ENCODE measurements at regions of chr16 and their contacts with region 1.

Region 1: DNA sequence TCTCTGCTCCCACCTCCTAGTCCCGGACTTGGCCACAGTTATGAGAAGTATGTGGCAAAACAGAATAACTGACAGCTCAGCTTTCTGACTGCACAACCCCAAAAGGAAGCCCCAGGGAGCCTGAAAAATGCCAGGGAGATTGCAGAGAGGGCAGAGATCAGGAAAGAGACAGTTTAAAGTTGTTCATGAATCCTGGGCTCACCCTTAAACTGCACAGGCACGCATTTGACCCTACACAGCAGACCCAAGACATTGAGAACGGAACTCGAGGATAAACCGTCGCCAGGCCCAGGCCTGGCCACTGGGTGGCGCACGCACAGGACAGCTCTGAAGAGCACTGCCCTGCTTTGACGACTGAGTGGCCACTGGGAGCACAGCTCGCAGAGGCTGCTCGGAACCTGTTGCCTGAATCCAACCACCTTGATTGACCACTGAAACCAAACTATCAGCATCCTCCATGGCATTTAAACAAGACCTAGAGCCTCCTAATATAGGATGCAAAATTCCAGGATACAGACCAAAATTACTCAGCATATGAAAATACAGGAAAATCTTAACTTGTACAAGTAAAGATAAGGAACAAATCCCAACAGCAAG is 114.0 kb downstream of the C16orf95 start:
- DNase-seq: peak; percentile 85
- ATAC-seq: peak; percentile 99
- H3K4me3 ChIP-seq: peak overlapping the region in 1 of 2 experiments; percentile 1; a peak in 1 of 4 replicates
- H3K27ac ChIP-seq: no peak overlapping the region
- H3K4me1 ChIP-seq: peaks cover 2 to 27% of the 10 kb centered on the region in 2 experiments; a peak in 3 of 4 replicates
- H3K27me3 ChIP-seq: no peaks in the 10 kb centered on the region
- CTCF ChIP-seq: peak; percentile 96 to 100 (median 100)
- POLR2A ChIP-seq: no peak
- RAD21 ChIP-seq: peak; percentile 88

Region 2: GRCh38 chr16:87178977-87179376 is 24.2 kb before region 1 on chr16:
- CTCF ChIA-PET with region 1: no interaction called
- POLR2A ChIA-PET with region 1: no interaction called
- RAD21 ChIA-PET with region 1: no interaction called
- intact Hi-C with region 1: no loop called
- DNase-seq: no peak
- ATAC-seq: no peak
- H3K4me3 ChIP-seq: no peak overlapping the region
- H3K27ac ChIP-seq: no peak overlapping the region
- H3K4me1 ChIP-seq: peaks cover 4 to 18% of the 10 kb centered on the region in 2 experiments; a peak in 3 of 4 replicates
- H3K27me3 ChIP-seq: no peaks in the 10 kb centered on the region
- CTCF ChIP-seq: no peak
- POLR2A ChIP-seq: no peak
- RAD21 ChIP-seq: no peak

Region 3: GRCh38 chr16:87190288-87191230 is 12.6 kb before region 1 on chr16:
- CTCF ChIA-PET with region 1: interaction called, 11 read pairs
- POLR2A ChIA-PET with region 1: no interaction called
- RAD21 ChIA-PET with region 1: no interaction called
- intact Hi-C with region 1: no loop called
- DNase-seq: peak; percentile 10
- ATAC-seq: peak; percentile 82
- H3K4me3 ChIP-seq: no peak overlapping the region
- H3K27ac ChIP-seq: no peak overlapping the region
- H3K4me1 ChIP-seq: no peaks in the 10 kb centered on the region
- H3K27me3 ChIP-seq: no peaks in the 10 kb centered on the region
- CTCF ChIP-seq: peak; percentile 66 to 73 (median 67); a peak in 5 of 6 replicates
- POLR2A ChIP-seq: no peak
- RAD21 ChIP-seq: peak; percentile 75

Region 4: DNA sequence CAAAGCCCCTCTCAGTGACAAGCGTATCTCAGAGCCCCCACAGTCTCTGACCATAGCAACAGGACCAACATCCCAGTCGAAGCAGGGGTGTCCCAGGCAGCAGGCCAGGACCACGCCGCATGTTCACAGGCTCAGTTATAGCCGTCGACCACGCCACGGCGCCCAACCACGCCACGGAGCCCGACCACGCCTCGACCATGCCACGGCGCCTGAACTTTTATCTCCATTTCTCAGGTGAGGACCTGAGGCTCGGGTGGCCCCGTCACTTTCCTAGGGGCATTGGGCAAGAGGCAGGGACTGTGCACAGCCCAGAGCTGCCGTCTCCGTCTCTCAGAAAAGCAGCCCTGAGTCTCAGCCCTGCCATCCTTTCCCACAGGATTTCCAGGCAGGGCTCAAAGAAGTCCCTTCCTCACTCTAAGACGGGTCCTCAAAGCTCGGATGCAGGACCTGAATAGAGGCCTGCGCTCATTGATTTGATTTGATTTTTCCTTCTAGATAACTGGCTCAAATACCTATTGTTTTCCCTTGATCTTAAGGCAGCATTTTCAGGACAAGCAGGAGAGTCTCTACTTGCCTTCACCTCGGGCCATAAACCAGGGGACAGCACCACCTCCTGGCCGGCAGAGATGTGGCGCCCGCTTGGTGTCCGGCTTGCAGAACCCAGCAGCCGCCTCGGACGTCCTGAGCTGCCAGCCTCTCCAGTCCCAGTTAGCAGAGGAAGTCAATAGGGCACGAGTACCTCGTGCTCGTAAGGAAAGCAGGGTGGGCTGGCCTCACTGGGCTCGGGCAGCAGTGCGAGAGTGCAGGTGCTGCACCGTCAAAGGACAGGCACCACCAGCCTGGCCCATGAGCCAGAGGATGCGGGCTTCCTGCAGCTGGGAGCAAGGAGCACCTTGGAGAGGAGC is 75.3 kb after region 1 on chr16:
- CTCF ChIA-PET with region 1: interaction called, 39 read pairs
- POLR2A ChIA-PET with region 1: interaction called, 3 read pairs
- RAD21 ChIA-PET with region 1: interaction called, 6 to 12 read pairs
- intact Hi-C with region 1: loop called (anchors 1 kb)
- DNase-seq: peak; percentile 52
- ATAC-seq: peak; percentile 99
- H3K4me3 ChIP-seq: no peak overlapping the region
- H3K27ac ChIP-seq: no peak overlapping the region
- H3K4me1 ChIP-seq: peaks cover 0 to 8% of the 10 kb centered on the region in 2 experiments; a peak in 1 of 4 replicates
- H3K27me3 ChIP-seq: no peaks in the 10 kb centered on the region
- CTCF ChIP-seq: peak; percentile 97 to 99 (median 97)
- POLR2A ChIP-seq: no peak
- RAD21 ChIP-seq: peak; percentile 99